Astrocyte of the cerebellum (primary cell): ENCODE measurements at regions of chr7 and their contacts with region 1.

Region 1: GRCh38 chr7:46162609-46163008 is 241.5 kb upstream of the IGFBP3 start:
- DNase-seq: no peak
- H3K4me3 ChIP-seq: no peak overlapping the region
- CTCF ChIP-seq: no peak

Region 2: DNA sequence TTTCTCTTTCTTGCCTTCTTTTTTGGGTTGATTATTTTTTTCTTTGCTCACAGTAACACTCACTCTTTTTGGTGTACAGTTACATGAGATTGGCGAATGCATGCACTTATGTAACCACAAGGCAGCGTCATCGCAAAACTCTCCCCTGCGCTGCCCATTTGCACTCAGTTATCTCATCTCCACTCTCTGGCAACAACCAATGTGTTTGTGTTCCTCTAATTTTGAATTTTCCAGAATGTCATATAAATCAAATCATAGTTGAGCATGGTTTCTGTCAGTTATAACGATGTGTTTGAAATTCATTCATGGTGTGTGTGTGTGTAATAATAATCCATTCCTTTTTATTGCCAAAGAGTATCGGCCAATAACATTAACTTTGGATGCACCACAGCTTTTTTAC is 218.6 kb before region 1 on chr7:
- in situ Hi-C with region 1: loop called (anchors 10 kb)
- DNase-seq: no peak
- H3K4me3 ChIP-seq: no peak overlapping the region
- CTCF ChIP-seq: no peak

Region 3: DNA sequence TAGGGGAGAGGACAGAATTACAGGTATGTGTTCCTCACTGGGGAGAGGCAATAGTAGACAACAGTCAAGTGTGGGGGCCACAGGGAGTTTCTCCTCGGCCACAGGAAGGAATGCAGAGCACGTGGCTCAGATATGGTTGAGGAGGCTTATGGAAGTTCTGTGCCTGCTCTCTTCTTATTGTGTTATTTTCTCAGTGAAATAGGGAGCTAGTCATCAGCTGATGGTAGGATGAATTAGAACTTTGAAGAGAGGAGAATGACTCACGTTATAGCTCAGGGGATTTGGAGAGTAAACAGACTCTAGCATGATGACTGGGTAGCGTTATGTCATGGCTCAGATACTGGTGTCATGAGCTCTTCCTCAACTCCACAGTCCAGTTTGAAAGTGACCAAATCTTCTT is 66.8 kb after region 1 on chr7:
- in situ Hi-C with region 1: loop called (anchors 5 kb)
- DNase-seq: no peak
- H3K4me3 ChIP-seq: no peak overlapping the region
- CTCF ChIP-seq: no peak